Posterior cingulate gyrus (tissue), 11 donors: ENCODE measurements at regions of chr19 and their contacts with region 1.

Region 1: DNA sequence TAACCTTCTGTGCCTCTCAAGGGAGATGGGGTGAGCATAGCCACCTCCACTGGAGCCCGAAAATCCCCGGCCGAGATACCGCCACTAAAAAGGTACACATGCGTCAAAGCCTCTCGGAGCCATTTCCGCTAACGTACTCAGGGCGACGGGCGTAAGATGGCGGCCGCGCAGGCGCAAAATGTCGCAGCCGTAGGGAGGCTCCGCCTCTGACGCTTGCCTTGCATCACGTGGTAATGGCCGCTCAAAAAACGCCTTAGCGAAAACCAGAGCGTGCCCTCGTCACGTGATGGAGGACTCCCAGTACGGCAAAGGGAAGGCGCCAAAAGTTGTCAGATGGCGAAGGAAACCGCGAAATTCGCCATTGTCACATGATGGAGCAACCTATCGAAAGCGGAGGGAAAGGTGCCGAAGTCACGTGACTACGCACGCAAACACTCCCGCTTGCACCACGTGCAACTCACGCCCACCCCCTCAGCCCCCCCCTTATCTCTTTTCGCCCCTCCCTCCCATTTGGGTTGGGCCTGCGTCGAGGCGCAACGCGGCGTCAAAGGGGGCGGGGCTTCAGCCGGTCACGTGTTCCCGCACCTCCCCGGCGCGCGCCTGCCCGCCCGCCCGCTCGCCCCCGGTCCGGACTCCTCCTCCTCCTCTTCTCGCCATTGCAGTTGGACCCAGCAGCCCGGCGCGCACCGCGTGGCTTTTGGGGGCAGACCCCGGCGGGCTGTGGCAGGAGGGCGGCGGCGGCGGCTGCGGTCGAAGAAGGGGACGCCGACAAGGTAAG is at the start of gene ILF3:
- DNase-seq: peak; percentile 97 to 100 (median 98)

Region 2: DNA sequence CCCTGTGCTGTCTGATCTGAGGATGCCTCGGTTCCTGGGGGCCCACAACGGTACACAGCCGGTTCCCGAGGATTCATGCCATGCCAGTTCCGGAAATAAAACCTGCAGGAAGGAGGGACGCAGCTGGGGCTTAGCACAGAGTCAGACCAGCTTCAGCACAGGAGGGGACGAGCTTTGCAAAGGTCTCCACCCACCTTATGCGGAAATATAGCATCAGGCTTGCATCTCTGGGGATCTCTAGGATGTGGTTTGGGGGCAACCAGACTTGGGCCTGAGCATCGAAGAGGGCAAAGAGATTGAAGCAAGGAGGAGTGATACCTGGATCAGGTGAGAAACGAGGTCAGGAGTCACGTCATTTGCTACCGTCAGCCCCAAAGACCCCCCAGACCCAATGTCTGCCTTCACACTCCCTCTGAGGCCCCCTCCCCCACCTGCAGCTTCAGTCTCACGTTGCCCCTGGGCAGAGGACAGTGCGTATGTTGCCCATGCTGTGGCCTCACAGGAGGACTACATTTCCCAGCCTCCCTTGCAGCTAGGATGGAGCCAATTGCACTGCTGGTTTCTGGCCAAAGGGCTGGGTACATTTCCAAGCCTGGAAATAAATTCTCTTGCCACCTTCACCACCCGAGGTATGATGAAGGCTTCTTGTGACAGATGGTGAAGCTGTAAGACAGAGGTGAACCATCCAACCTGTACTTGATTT is 285.7 kb before region 1 on chr19:
- intact Hi-C with region 1: no loop called
- DNase-seq: peak in 1 of 10 donors; percentile 59

Region 3: DNA sequence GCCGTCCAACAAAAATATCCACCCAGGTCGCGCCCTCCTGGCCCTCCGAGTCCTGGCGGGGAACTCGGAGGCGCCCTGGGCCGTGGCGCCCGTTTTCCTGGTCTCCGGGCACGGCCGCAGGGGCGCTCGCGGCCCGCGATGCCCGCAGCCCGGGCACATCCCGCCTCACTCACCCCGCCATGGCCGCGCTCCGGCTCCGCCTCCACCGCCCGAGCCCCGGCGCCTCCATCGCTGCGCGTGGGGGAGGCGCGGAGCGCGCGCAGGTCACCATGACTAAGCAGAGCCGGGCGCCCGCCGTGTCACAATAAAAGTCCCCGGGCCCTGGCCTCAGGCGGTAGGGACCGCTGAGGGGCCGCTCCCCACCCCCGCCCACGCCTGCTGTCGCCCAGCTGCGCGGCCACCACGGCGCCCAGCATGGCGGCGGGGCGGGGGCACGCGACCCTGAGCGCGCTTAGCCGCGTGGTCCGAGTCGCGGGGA is 151.3 kb before region 1 on chr19:
- intact Hi-C with region 1: loop called (anchors 10 kb)
- DNase-seq: peak; percentile 83 to 98 (median 90)

Region 4: DNA sequence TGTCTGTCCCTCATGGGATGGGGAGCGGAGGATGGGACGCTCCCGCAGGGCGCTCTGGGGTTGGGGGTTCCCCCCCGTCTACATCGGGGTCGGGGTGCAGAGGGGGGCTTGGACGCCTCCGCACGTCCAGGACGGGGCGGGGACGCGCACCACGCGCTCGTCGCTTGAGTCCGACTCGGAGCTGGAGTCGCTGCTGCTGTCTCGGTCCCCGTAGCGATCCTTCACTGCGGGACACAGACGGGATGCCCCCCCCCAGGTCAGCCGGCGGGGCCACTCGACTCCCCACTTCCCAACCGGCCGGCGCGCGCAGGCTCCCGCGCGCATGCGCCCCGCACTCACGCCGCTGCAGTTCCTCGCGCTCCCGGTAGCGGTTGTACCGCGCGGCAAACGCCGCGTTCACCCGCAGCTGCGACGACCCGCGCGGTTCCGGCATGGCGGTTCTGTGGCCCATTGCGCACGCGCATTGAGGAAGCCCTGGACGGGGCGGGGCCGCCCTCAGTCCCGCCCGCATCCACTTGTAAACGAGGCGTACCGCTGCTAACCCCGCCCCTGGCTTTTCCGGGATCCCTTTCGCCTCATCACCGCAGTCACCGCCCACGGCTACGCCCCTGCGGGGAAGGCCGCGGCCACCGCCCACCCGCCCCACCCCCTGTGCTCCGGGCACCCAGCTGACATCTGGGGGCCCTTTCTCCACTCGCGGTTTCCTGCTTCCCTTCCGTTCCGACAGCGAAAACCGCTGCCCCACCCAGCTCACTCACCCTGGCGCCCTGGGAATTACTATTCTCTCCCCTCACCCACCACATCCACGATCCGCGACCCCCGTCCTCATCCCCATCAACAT is 88.1 kb before region 1 on chr19 and contains the start of gene KRI1:
- intact Hi-C with region 1: loop called (anchors 5 kb)
- DNase-seq: peak; percentile 94 to 100 (median 96)

Region 5: DNA sequence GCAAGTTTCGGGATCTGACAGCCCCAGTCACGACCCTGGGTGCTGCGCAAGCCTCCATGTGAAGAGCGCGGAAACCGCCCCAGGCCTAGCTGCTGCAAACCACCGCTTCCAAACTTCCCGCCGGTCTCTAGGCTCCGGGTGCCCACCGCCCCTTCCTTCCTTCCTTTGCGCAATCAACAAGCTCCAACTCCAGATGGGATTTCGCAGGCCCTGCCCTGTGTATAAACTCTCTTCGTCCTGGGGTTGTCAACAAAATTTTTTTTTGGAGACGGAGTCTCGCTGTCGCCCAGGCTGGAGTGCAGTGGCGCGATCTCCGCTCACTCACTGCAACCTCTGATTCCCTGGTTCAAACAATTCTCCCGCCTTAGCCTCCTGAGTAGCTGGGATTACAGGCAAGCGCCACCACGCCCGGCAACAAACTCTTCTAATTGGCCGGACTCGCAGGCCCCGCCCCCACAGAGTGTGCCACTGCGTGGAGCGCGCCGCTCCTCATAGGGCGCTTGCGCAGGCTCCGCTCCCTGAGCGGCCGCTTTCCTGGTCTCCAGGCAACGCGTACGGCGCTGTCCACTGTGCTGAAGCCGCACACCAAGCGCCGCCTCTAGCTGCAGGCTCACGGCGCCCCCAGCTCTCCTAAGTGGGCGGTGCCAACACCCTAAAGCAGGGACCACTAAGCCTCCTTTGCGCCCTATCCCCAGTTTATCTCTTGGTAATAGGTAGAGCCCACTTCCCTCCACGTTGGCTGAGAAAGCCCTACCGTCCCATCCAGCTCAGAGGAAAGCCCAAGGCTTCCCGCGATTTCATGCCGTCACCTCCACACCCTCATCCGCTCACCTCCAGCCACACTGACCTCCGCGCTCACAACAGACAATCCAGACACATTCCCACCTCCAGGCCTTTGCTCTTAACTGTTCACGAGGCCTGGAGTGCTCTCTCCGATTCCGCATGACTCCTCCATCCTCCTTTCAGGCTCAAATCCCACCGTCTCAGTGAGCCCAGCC is 41.8 kb after region 1 on chr19:
- intact Hi-C with region 1: loop called (anchors 2 kb)
- DNase-seq: peak; percentile 71 to 99 (median 91)

Region 6: GRCh38 chr19:10747271-10747670 is 93.4 kb after region 1 on chr19:
- intact Hi-C with region 1: no loop called
- DNase-seq: peak in 1 of 10 donors; percentile 71